K562 (cell line): ENCODE measurements at regions of chr7 and their contacts with region 1.

Region 1: GRCh38 chr7:25894902-25895791 is 256.9 kb upstream of the NFE2L3 start:
- DNase-seq: peak; percentile 71 to 79 (median 74)
- ATAC-seq: peak; percentile 87
- H3K4me3 ChIP-seq: peak overlapping the region; percentile 4; the same call in 1 of the 2 replicates
- H3K27ac ChIP-seq: no peak overlapping the region
- H3K4me1 ChIP-seq: peaks cover 4 to 18% of the 10 kb centered on the region in 2 experiments; a peak in 4 of 5 replicates
- H3K27me3 ChIP-seq: no peaks in the 10 kb centered on the region; a peak in 1 of 5 replicates
- CTCF ChIP-seq: peak; percentile 50 to 74 (median 63)
- EP300 ChIP-seq: no peak
- POLR2A ChIP-seq: no peak
- RAD21 ChIP-seq: peak; percentile 62 to 68

Region 2: DNA sequence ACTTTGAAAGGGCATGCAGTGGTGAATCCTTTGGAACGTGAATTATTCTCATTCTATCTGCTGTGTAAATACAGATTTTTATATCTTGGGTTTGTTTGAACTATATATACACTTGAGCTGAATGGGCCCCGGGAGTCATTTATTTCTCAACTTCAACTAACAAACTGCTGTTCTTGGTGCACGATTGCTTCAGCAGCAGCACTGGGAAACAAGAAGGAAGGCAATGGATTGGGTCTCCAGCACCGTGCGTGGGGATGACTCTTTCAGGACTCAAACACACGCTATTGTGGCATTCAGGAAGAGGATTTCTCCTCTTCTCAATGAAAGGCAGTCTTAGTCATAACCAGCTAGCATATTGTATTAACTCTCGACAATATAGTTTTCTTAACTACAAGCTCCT is 30.9 kb after region 1 on chr7:
- CTCF ChIA-PET with region 1: no interaction called
- POLR2A ChIA-PET with region 1: no interaction called
- in situ Hi-C with region 1: no loop called
- intact Hi-C with region 1: loop called (anchors 2 kb)
- DNase-seq: peak in 1 of 4 experiments; percentile 40
- ATAC-seq: peak; percentile 45; the same call in 2 of the 3 replicates
- H3K4me3 ChIP-seq: no peak overlapping the region
- H3K27ac ChIP-seq: peak overlapping the region; percentile 61; the same call in 1 of the 3 replicates
- H3K4me1 ChIP-seq: peaks cover 7 to 18% of the 10 kb centered on the region in 2 experiments
- H3K27me3 ChIP-seq: no peaks in the 10 kb centered on the region
- CTCF ChIP-seq: no peak
- EP300 ChIP-seq: no peak; the same call in 1 of the 2 replicates
- POLR2A ChIP-seq: no peak
- RAD21 ChIP-seq: no peak

Region 3: DNA sequence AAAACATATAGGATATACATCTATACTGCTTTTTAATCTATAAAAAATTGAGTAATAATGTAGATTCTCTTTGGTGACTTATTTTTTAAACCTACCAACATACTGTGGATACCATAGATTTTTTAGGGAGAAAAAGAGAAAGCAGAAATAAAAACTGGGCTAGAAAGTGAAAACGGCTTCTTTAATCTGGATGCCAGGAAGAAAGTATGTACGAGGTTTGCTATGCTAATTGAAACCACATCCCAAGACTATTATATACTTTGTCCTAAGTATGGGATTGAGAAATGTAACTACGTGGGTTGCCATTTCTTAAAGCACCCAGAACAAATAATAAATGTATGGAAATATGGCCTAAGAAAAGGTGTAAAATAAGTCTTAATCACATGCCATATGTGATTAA is 127.8 kb after region 1 on chr7:
- CTCF ChIA-PET with region 1: no interaction called
- POLR2A ChIA-PET with region 1: no interaction called
- in situ Hi-C with region 1: no loop called
- intact Hi-C with region 1: no loop called
- DNase-seq: no peak
- ATAC-seq: no peak
- H3K4me3 ChIP-seq: no peak overlapping the region
- H3K27ac ChIP-seq: no peak overlapping the region
- H3K4me1 ChIP-seq: no peaks in the 10 kb centered on the region
- H3K27me3 ChIP-seq: peaks cover 1 to 8% of the 10 kb centered on the region in 2 experiments
- CTCF ChIP-seq: no peak
- EP300 ChIP-seq: no peak
- POLR2A ChIP-seq: no peak
- RAD21 ChIP-seq: no peak

Region 4: DNA sequence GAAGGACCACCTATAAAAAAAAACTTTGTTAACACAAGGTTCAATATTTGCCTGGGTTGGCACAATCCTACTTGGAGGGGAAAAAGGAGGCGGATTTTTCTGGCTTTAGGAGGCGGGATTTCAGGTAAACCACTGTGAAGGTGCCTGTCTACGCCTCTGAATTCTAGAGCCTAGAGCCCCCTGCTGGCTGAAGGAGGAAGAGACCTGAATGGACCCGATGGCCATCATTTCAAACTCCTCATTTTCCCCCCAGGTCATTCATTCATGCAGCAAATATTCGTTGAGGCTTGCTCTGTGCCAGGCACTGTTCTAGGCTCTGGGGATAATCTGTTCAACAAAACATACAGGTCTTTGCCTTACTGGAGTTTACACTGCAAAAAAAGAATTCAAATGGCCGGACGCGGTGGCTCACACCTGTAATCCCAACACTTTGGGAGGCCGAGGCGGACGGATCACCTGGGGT is 166.6 kb after region 1 on chr7:
- CTCF ChIA-PET with region 1: interaction called, 22 read pairs
- POLR2A ChIA-PET with region 1: no interaction called
- in situ Hi-C with region 1: loop called (anchors 5 kb)
- intact Hi-C with region 1: loop called (anchors 1 kb)
- DNase-seq: peak; percentile 68 to 72 (median 70)
- ATAC-seq: peak; percentile 94
- H3K4me3 ChIP-seq: no peak overlapping the region
- H3K27ac ChIP-seq: no peak overlapping the region
- H3K4me1 ChIP-seq: no peaks in the 10 kb centered on the region
- H3K27me3 ChIP-seq: peaks cover 21 to 29% of the 10 kb centered on the region in 2 experiments
- CTCF ChIP-seq: peak; percentile 83 to 85 (median 84)
- EP300 ChIP-seq: no peak
- POLR2A ChIP-seq: no peak
- RAD21 ChIP-seq: peak; percentile 75 to 85

Region 5: GRCh38 chr7:26284995-26285632 is 390.0 kb after region 1 on chr7:
- CTCF ChIA-PET with region 1: interaction called, 22 read pairs
- POLR2A ChIA-PET with region 1: no interaction called
- in situ Hi-C with region 1: no loop called
- intact Hi-C with region 1: loop called (anchors 1 kb)
- DNase-seq: peak; percentile 31 to 81 (median 58)
- ATAC-seq: peak; percentile 99
- H3K4me3 ChIP-seq: no peak overlapping the region
- H3K27ac ChIP-seq: no peak overlapping the region
- H3K4me1 ChIP-seq: peaks cover 0 to 5% of the 10 kb centered on the region in 2 experiments; a peak in 2 of 5 replicates
- H3K27me3 ChIP-seq: no peaks in the 10 kb centered on the region; a peak in 1 of 5 replicates
- CTCF ChIP-seq: peak; percentile 68 to 88 (median 72)
- EP300 ChIP-seq: no peak
- POLR2A ChIP-seq: no peak
- RAD21 ChIP-seq: peak; percentile 94 to 95

Region 6: GRCh38 chr7:26667500-26668133 is 772.5 kb after region 1 on chr7:
- CTCF ChIA-PET with region 1: interaction called, 10 read pairs
- POLR2A ChIA-PET with region 1: no interaction called
- in situ Hi-C with region 1: loop called (anchors 10 kb)
- intact Hi-C with region 1: loop called (anchors 2 kb)
- DNase-seq: peak; percentile 23 to 84 (median 44)
- ATAC-seq: peak; percentile 87
- H3K4me3 ChIP-seq: no peak overlapping the region
- H3K27ac ChIP-seq: no peak overlapping the region
- H3K4me1 ChIP-seq: no peaks in the 10 kb centered on the region
- H3K27me3 ChIP-seq: peaks cover 0 to 9% of the 10 kb centered on the region in 2 experiments; a peak in 2 of 5 replicates
- CTCF ChIP-seq: peak; percentile 87 to 98 (median 90)
- EP300 ChIP-seq: no peak
- POLR2A ChIP-seq: no peak
- RAD21 ChIP-seq: peak; percentile 95 to 96